ENCODE measurements at regions of chr3 and their contacts with region 1.

Region 1: DNA sequence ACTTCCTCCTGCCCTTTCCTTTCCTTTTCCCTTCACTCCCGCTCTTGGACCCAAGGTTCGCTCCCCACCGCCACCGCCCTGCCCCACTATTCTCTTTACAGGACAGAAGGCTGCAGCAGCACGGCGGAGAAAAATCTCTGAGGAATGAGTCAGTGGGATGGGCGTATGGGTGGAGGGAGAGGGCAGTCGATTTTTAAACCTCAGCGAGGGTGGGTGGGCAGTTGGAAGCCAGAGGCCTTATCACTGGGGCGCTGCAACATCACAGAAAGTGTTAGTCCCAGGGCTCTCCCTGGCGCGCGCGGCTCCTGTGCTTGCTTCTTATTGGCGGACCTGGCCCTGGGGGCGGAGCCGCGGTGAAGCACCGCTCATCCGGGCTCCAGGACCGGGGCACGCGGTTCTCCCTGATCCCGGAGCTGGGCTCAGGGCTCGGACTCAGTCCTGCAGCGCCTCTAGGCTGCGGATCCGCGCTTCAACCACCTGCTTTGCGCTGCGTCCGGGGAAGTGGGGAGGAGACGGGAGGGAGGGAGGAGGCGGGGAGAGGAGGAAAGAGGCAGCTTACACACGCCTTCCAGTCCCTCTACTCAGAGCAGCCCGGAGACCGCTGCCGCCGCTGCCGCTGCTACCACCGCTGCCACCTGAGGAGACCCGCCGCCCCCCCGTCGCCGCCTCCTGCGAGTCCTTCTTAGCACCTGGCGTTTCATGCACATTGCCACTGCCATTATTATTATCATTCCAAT is at the start of gene ALCAM:
- DNase-seq: peak; percentile 95
- H3K4me3 Mint-ChIP-seq: peak within 1 kb of the TSS; percentile 94
- H3K27ac Mint-ChIP-seq: peak within 1 kb of the TSS; percentile 99
- H3K4me1 Mint-ChIP-seq: peaks cover 45% of the 10 kb centered on the region
- H3K27me3 Mint-ChIP-seq: peaks cover 25% of the 10 kb centered on the region
- total RNA-seq, gene ALCAM: 26.3 and 26.5 TPM in 2 replicates

Region 2: GRCh38 chr3:104564045-104564643 is 802.4 kb before region 1 on chr3:
- intact Hi-C with region 1: loop called (anchors 1 kb)
- DNase-seq: peak; percentile 85
- H3K4me3 Mint-ChIP-seq: no peak overlapping the region
- H3K27ac Mint-ChIP-seq: no peak overlapping the region
- H3K4me1 Mint-ChIP-seq: no peaks in the 10 kb centered on the region
- H3K27me3 Mint-ChIP-seq: no peaks in the 10 kb centered on the region

Region 3: GRCh38 chr3:105527949-105528348 is 161.5 kb after region 1 on chr3:
- intact Hi-C with region 1: loop called (anchors 2 kb)
- DNase-seq: no peak
- H3K4me3 Mint-ChIP-seq: no peak overlapping the region
- H3K27ac Mint-ChIP-seq: no peak overlapping the region
- H3K4me1 Mint-ChIP-seq: peaks cover 7% of the 10 kb centered on the region
- H3K27me3 Mint-ChIP-seq: no peaks in the 10 kb centered on the region

Region 4: GRCh38 chr3:105774444-105775180 is 408.1 kb after region 1 on chr3:
- intact Hi-C with region 1: loop called (anchors 5 kb)
- DNase-seq: no peak
- H3K4me3 Mint-ChIP-seq: no peak overlapping the region
- H3K27ac Mint-ChIP-seq: peak overlapping the region; percentile 78
- H3K4me1 Mint-ChIP-seq: peaks cover 65% of the 10 kb centered on the region
- H3K27me3 Mint-ChIP-seq: no peaks in the 10 kb centered on the region

Region 5: GRCh38 chr3:106013971-106014370 is 647.5 kb after region 1 on chr3:
- intact Hi-C with region 1: loop called (anchors 5 kb)
- DNase-seq: no peak
- H3K4me3 Mint-ChIP-seq: no peak overlapping the region
- H3K27ac Mint-ChIP-seq: peak overlapping the region; percentile 51
- H3K4me1 Mint-ChIP-seq: peaks cover 31% of the 10 kb centered on the region
- H3K27me3 Mint-ChIP-seq: no peaks in the 10 kb centered on the region

Region 6: DNA sequence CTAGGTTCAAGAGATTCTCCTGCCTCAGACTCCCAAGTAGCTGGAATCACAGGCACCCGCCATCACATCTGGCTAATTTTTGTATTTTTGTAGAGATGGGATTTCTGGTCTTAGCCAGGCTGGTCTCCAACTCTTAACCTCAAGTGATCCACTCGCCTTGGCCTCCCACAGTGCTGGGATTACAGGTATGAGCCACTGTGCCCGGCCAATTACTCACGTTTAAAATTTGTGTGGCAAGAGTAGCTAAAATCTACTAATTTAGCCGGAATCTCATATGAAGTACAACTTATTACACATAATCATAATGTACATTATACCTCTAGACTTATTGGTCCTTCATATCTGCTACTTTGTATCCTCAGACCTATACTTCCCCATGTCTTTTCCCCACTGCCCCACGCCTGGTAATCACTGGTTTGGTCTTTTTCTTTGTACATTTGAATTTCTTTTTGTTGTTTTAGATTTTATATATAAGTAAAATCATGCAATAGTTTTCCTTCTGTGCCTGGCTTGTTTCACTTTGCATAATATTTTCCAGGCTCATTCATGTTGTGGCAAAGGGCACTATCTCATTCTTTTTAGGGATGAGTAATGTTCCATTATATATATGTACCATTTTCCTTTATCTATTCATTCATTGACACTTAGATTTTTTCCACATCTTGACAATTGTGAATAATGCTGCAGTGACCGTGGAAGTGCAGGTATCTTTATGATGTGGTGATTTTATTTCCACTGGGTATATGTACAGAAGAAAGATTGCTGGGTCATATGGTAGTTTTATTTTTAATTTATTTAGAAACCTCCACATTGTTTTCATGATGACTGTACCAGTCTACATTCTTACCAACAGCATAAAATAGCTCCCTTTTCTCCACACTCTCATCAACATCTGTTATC is 1107.3 kb after region 1 on chr3:
- intact Hi-C with region 1: loop called (anchors 2 kb)
- DNase-seq: no peak
- H3K4me3 Mint-ChIP-seq: no peak overlapping the region
- H3K27ac Mint-ChIP-seq: peak overlapping the region; percentile 83
- H3K4me1 Mint-ChIP-seq: peaks cover 8% of the 10 kb centered on the region
- H3K27me3 Mint-ChIP-seq: no peaks in the 10 kb centered on the region